ENCODE measurements at regions of chr10 and their contacts with region 1.

Region 1: DNA sequence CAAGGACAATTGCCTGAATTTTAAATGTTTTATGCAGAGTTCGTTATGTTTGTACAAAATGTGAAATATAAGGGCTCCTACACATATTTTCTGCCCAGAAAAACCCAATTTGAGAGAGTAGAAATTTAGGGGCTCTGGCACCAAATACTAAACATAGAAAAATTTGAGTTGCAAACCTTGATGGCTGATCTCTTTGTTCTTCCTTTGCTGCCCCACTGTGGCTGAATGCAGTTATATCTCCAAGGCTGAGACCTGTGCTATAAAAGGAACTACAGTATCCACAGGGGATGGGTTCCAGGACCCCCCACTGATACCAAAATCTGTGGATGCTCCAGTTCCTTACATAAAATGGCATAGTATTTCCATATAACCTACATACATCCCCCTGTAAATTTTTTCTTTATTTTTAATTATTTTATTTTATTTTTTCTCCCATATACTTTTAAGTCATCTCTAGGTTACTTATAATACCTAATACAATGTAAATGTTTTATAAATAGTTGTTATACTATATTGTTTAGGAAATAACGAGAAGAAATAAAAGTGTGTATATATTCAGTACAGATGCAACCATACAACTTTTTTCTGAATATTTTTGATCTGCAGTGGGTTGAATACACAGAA is 22.5 kb downstream of the CFAP43 start:
- DNase-seq: peak; percentile 62
- H3K4me3 Mint-ChIP-seq: no peak overlapping the region
- H3K27ac Mint-ChIP-seq: no peak overlapping the region
- H3K4me1 Mint-ChIP-seq: no peaks in the 10 kb centered on the region
- H3K27me3 Mint-ChIP-seq: no peaks in the 10 kb centered on the region
- CTCF ChIP-seq: peak; percentile 65

Region 2: GRCh38 chr10:104028146-104028545 is 181.5 kb before region 1 on chr10:
- CTCF ChIA-PET with region 1: interaction called, 3 read pairs
- POLR2A ChIA-PET with region 1: interaction called, 3 read pairs
- intact Hi-C with region 1: loop called (anchors 5 kb)
- DNase-seq: peak; percentile 20
- H3K4me3 Mint-ChIP-seq: no peak overlapping the region
- H3K27ac Mint-ChIP-seq: peak overlapping the region; percentile 75
- H3K4me1 Mint-ChIP-seq: no peaks in the 10 kb centered on the region
- H3K27me3 Mint-ChIP-seq: no peaks in the 10 kb centered on the region
- CTCF ChIP-seq: peak; percentile 20

Region 3: GRCh38 chr10:104045151-104046089 is 164.3 kb before region 1 on chr10:
- CTCF ChIA-PET with region 1: no interaction called
- POLR2A ChIA-PET with region 1: no interaction called
- intact Hi-C with region 1: loop called (anchors 1 kb)
- DNase-seq: peak; percentile 64
- H3K4me3 Mint-ChIP-seq: no peak overlapping the region
- H3K27ac Mint-ChIP-seq: no peak overlapping the region
- H3K4me1 Mint-ChIP-seq: peaks cover 4% of the 10 kb centered on the region
- H3K27me3 Mint-ChIP-seq: no peaks in the 10 kb centered on the region
- CTCF ChIP-seq: peak; percentile 47

Region 4: GRCh38 chr10:104835422-104835821 is 625.7 kb after region 1 on chr10:
- CTCF ChIA-PET with region 1: no interaction called
- POLR2A ChIA-PET with region 1: no interaction called
- intact Hi-C with region 1: no loop called
- DNase-seq: peak; percentile 59
- H3K4me3 Mint-ChIP-seq: no peak overlapping the region
- H3K27ac Mint-ChIP-seq: peak overlapping the region; percentile 24
- H3K4me1 Mint-ChIP-seq: peaks cover 24% of the 10 kb centered on the region
- H3K27me3 Mint-ChIP-seq: no peaks in the 10 kb centered on the region
- CTCF ChIP-seq: no peak